ENCODE measurements at regions of chr10 and their contacts with region 1.

Region 1: DNA sequence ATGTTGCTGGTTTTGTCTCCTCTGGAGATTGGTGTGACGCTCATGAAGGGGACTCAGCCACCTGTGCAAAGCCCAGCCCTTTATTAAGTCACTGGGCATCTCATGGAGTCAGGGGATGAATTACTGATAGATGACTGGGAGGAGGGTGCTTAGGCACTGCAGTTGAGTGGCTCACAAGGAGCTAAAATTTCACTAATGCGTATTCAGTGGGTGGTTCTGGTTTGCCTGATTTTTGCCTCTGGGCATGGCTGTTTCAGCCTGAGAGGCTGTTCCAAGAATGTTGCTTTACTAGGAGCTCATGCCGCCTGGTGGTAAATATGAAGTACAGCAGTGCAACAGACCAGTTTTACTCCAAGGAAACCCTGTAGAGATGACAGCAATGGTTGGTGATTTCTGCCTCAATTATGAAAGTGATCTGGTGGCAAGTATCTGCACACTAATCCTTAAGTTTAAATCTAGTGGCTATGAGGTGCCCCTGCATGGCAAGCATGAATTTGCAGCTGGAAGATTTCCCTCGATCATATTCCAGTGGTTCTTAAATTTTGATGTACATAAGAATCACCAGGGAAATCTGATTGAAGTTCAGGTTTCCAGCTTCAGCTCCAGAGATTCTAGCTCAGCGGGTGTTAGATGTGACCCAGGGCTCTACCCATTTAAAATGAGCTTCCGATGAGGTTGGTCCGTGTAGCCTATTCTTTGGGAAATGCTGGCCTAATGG is 19.9 kb downstream of the ACTA2 start:
- DNase-seq: peak; percentile 71
- H3K4me3 ChIP-seq: no peak overlapping the region
- H3K27me3 ChIP-seq: no peaks in the 10 kb centered on the region
- CTCF ChIP-seq: peak; percentile 84

Region 2: GRCh38 chr10:88386821-88387773 is 545.6 kb before region 1 on chr10:
- CTCF ChIA-PET with region 1: no interaction called
- POLR2A ChIA-PET with region 1: no interaction called
- DNase-seq: no peak
- H3K4me3 ChIP-seq: no peak overlapping the region
- H3K27me3 ChIP-seq: no peaks in the 10 kb centered on the region
- CTCF ChIP-seq: no peak

Region 3: DNA sequence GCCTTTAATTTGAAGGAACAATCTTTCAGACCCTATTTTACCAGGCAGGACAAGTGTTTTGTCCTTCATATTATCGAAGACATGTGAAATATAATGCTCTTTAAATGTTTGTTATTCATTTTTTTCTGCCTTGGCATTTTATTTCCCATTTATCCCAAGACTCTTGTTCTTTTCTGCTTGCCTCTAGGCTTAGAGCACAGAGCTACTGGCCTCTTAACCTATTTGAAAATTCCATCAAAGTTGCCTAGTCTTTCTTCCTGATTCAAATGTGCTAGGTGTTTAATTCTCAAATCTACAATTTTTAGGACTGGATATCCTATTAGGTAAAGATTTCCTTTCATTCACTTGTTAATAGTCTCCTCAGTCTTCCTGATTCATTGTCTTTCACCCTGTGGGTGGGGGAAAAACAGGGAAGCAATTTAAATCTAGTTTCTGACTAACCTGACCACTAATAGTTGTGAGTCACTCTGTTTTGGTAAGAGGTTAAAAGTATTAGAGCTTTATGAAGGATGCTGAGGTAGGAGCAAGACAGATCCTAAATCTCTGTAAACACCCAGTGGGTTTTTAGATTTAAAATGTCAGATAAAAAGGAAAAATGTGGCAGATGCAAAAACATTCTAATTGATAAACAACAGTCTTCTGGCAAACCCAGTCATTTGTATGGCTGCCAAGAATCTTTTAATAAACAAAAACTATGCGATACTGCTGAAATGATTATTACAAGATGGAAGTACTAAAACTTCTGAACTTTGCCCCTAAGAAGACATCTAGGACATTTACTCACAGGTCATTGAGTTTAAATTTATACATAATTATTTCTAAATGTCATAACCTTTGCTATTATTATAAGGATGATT is 225.0 kb before region 1 on chr10:
- CTCF ChIA-PET with region 1: no interaction called
- POLR2A ChIA-PET with region 1: no interaction called
- DNase-seq: peak; percentile 58
- H3K4me3 ChIP-seq: no peak overlapping the region
- H3K27me3 ChIP-seq: no peaks in the 10 kb centered on the region
- CTCF ChIP-seq: no peak

Region 4: DNA sequence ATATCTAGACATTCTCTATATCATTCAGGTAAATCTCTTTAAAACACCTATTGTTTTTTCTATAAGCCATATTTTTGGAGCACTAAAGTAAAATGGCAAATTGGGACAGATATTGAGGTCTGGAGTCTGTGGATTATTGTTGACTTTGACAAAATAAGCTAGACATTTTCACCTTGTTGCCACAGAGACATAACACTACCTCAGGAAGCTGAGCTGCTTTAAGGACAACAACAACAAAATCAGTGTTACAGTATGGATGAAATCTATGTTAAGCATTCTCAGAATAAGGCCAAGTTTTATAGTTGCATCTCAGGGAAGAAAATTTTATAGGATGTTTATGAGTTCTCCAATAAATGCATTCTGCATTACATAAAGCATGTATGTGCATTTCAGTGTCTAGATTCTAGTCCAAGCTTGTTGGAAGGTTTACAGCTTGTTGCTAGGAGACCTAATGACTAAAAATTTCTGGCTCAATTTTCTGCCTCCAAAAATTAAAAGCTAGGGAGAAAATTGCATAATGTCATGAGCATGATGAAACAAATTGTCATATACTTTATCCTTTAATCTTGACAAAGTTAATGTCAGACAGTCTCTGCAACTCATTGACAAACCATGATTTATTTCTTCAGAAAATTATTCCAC is 111.8 kb before region 1 on chr10:
- CTCF ChIA-PET with region 1: interaction called, 17 read pairs
- POLR2A ChIA-PET with region 1: no interaction called
- DNase-seq: peak; percentile 77
- H3K4me3 ChIP-seq: no peak overlapping the region
- H3K27me3 ChIP-seq: no peaks in the 10 kb centered on the region
- CTCF ChIP-seq: no peak

Region 5: GRCh38 chr10:88835096-88835909 is 97.4 kb before region 1 on chr10:
- CTCF ChIA-PET with region 1: interaction called, 512 read pairs
- POLR2A ChIA-PET with region 1: interaction called, 3 read pairs
- DNase-seq: peak; percentile 41
- H3K4me3 ChIP-seq: no peak overlapping the region
- H3K27me3 ChIP-seq: no peaks in the 10 kb centered on the region
- CTCF ChIP-seq: peak; percentile 84

Region 6: GRCh38 chr10:88880282-88881076 is 52.2 kb before region 1 on chr10:
- CTCF ChIA-PET with region 1: interaction called, 24 read pairs
- POLR2A ChIA-PET with region 1: no interaction called
- DNase-seq: no peak
- H3K4me3 ChIP-seq: peak overlapping the region; percentile 85
- H3K27me3 ChIP-seq: no peaks in the 10 kb centered on the region
- CTCF ChIP-seq: peak; percentile 46

Region 7: GRCh38 chr10:88944813-88945212 is 12.1 kb after region 1 on chr10:
- CTCF ChIA-PET with region 1: interaction called, 27 read pairs
- POLR2A ChIA-PET with region 1: no interaction called
- DNase-seq: no peak
- H3K4me3 ChIP-seq: no peak overlapping the region
- H3K27me3 ChIP-seq: no peaks in the 10 kb centered on the region
- CTCF ChIP-seq: no peak

Region 8: DNA sequence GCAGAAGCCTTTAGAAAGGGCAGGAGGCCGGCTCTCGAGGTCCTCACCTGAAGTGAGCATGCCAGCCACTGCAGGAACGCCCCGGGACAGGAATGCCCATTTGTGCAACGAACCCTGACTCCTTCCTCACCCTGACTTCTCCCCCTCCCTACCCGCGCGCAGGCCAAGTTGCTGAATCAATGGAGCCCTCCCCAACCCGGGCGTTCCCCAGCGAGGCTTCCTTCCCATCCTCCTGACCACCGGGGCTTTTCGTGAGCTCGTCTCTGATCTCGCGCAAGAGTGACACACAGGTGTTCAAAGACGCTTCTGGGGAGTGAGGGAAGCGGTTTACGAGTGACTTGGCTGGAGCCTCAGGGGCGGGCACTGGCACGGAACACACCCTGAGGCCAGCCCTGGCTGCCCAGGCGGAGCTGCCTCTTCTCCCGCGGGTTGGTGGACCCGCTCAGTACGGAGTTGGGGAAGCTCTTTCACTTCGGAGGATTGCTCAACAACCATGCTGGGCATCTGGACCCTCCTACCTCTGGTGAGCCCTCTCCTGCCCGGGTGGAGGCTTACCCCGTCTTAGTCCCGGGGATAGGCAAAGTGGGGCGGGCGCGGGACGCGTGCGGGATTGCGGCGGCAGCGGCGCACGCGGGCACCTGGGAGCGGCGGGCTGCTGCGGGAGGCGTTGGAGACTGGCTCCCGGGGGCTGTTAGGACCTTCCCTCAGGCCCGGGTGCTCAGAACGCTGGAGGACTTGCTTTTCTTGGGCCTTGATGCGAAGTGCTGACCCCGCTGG is 57.9 kb after region 1 on chr10 and contains the start of gene FAS:
- CTCF ChIA-PET with region 1: interaction called, 136 read pairs
- POLR2A ChIA-PET with region 1: interaction called, 4 read pairs
- DNase-seq: no peak
- H3K4me3 ChIP-seq: peak within 1 kb of the TSS; percentile 75
- H3K27me3 ChIP-seq: no peaks in the 10 kb centered on the region
- CTCF ChIP-seq: no peak
- polyA plus RNA-seq, gene FAS: 52.3 and 83.2 TPM in 2 replicates

Region 9: GRCh38 chr10:89074120-89074519 is 141.4 kb after region 1 on chr10:
- CTCF ChIA-PET with region 1: no interaction called
- POLR2A ChIA-PET with region 1: no interaction called
- DNase-seq: no peak
- H3K4me3 ChIP-seq: no peak overlapping the region
- H3K27me3 ChIP-seq: no peaks in the 10 kb centered on the region
- CTCF ChIP-seq: no peak

Region 10: DNA sequence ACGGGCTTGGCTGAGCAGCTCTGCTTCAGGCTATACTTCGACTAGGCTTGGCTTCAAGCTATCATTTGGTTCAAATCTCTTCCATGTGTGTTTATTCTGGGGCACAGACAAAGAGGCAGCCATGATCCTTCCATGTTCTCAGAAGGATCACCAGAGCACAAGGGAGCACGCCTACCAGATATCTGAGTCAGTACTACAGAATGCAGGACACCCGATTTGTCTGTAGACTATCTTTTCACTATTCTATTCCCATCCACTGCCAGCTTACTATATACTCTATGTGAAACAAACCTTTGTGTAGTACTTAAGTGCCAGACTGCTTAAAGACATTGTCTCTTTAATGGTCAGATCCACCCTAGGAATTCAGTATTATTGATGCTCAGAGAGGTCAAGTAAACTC is 239.3 kb after region 1 on chr10:
- CTCF ChIA-PET with region 1: no interaction called
- POLR2A ChIA-PET with region 1: interaction called, 12 read pairs
- DNase-seq: no peak
- H3K4me3 ChIP-seq: no peak overlapping the region
- H3K27me3 ChIP-seq: 0 out of 2 replicates have a peak, but pooled peaks cover 1% of the 10 kb centered on the region
- CTCF ChIP-seq: no peak

Measured in BJ (cell line).